Caco-2 (cell line): ENCODE measurements at regions of chr7 and their contacts with region 1.

Region 1: GRCh38 chr7:123580406-123581161 is 21.0 kb upstream of the ASB15 start:
- DNase-seq: peak; percentile 52 to 64
- H3K4me3 ChIP-seq: no peak overlapping the region
- H3K4me3 Mint-ChIP-seq: peak overlapping the region; percentile 58
- H3K27ac Mint-ChIP-seq: no peak overlapping the region
- H3K4me1 ChIP-seq: no peaks in the 10 kb centered on the region
- H3K4me1 Mint-ChIP-seq: peaks cover 5% of the 10 kb centered on the region
- H3K27me3 ChIP-seq: no peaks in the 10 kb centered on the region
- H3K27me3 Mint-ChIP-seq: peaks cover 4% of the 10 kb centered on the region
- CTCF ChIP-seq: peak; percentile 88 to 92

Region 2: DNA sequence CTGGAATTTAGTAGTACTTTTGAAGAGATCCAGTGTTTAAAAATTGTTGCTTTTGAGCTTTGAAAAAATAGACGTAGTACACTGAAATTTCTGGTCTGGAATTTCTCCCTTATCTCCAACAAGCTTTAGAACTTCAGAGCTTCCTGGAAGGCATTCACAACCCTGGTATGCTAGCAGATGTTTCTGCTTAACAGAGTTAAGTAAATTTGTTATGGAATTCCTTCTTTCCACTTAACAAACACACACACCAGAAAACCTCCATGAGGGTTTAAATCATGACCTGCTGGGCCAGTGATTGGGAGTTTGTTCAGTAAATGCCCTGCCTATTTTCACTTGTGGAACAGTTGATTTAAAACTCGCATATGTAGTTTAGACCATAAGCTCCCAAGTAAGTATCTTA is 34.8 kb after region 1 on chr7:
- CTCF ChIA-PET with region 1: interaction called, 3 read pairs
- POLR2A ChIA-PET with region 1: no interaction called
- intact Hi-C with region 1: loop called (anchors 1 kb)
- DNase-seq: peak; percentile 60 to 66
- H3K4me3 ChIP-seq: no peak overlapping the region
- H3K4me3 Mint-ChIP-seq: peak overlapping the region; percentile 39
- H3K27ac Mint-ChIP-seq: peak overlapping the region; percentile 63
- H3K4me1 ChIP-seq: peaks cover 48% of the 10 kb centered on the region
- H3K4me1 Mint-ChIP-seq: peaks cover 32% of the 10 kb centered on the region
- H3K27me3 ChIP-seq: no peaks in the 10 kb centered on the region
- H3K27me3 Mint-ChIP-seq: no peaks in the 10 kb centered on the region
- CTCF ChIP-seq: no peak

Region 3: DNA sequence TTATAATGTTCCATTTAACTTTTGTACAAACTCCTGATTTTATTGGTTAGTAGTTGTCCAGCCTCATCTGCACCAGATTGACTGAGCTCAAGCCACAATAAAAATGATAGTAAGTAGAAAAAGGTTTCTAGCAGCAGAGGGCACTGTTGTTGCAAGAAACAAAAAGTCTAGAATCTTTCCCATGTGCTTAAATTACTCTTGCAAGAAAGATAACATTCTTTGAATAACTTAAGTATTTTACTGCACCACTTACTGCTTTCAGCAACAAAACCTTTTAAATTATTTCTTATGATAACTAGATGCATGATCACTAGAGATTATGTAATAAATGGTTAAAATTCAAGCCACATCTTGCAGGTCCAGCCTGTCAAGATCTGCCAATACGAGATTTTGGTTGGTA is 102.1 kb after region 1 on chr7:
- CTCF ChIA-PET with region 1: no interaction called
- POLR2A ChIA-PET with region 1: no interaction called
- intact Hi-C with region 1: loop called (anchors 2 kb)
- DNase-seq: peak in 1 of 2 experiments; percentile 54
- H3K4me3 ChIP-seq: no peak overlapping the region
- H3K4me3 Mint-ChIP-seq: no peak overlapping the region
- H3K27ac Mint-ChIP-seq: no peak overlapping the region
- H3K4me1 ChIP-seq: peaks cover 19% of the 10 kb centered on the region
- H3K4me1 Mint-ChIP-seq: no peaks in the 10 kb centered on the region
- H3K27me3 ChIP-seq: no peaks in the 10 kb centered on the region
- H3K27me3 Mint-ChIP-seq: no peaks in the 10 kb centered on the region
- CTCF ChIP-seq: peak; percentile 47 to 61